ENCODE measurements at regions of chr4 and their contacts with region 1.

Region 1: GRCh38 chr4:8267077-8267476 is 2.5 kb upstream of the HTRA3 start:
- DNase-seq: peak; percentile 72
- H3K4me3 ChIP-seq: no peak overlapping the region
- H3K27ac ChIP-seq: no peak overlapping the region
- H3K4me1 ChIP-seq: peaks cover 11% of the 10 kb centered on the region
- H3K27me3 ChIP-seq: no peaks in the 10 kb centered on the region
- CTCF ChIP-seq: peak; percentile 90 to 94
- POLR2A ChIP-seq: no peak

Region 2: GRCh38 chr4:8058031-8058479 is 209.0 kb before region 1 on chr4:
- CTCF ChIA-PET with region 1: no interaction called
- POLR2A ChIA-PET with region 1: no interaction called
- dilution Hi-C with region 1: no loop called
- intact Hi-C with region 1: no loop called
- DNase-seq: no peak
- H3K4me3 ChIP-seq: no peak overlapping the region
- H3K27ac ChIP-seq: no peak overlapping the region
- H3K4me1 ChIP-seq: no peaks in the 10 kb centered on the region
- H3K27me3 ChIP-seq: no peaks in the 10 kb centered on the region
- CTCF ChIP-seq: no peak
- POLR2A ChIP-seq: no peak

Region 3: GRCh38 chr4:8191136-8191747 is 75.8 kb before region 1 on chr4:
- CTCF ChIA-PET with region 1: no interaction called
- POLR2A ChIA-PET with region 1: no interaction called
- dilution Hi-C with region 1: no loop called
- intact Hi-C with region 1: no loop called
- DNase-seq: peak; percentile 99
- H3K4me3 ChIP-seq: no peak overlapping the region
- H3K27ac ChIP-seq: peak overlapping the region; percentile 95
- H3K4me1 ChIP-seq: peaks cover 61% of the 10 kb centered on the region
- H3K27me3 ChIP-seq: no peaks in the 10 kb centered on the region
- CTCF ChIP-seq: no peak
- POLR2A ChIP-seq: peak; percentile 74

Region 4: DNA sequence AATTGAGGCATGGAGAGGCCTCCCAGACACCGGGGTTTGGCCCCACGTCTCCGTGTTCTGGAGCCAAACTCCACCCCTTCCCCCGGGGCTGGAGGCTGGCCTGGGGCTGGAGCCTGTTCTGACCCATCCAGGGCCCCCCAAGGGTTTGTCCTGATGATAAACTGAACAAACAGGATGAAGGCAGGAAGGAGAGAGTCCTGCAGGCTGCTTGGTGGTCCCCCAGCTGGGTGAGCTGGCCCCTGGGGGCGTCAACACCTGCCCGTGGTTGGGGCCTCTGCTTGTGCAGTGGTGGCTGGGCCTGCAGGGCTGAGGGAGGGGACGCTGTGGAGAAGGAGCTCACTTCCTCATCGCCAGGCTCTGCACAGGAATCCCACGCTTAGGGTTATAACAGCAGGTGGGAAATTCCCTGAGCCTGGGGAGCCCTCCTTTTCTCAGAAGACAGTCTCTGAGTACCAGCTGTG is 65.7 kb before region 1 on chr4:
- CTCF ChIA-PET with region 1: no interaction called
- POLR2A ChIA-PET with region 1: no interaction called
- dilution Hi-C with region 1: no loop called
- intact Hi-C with region 1: no loop called
- DNase-seq: peak; percentile 52
- H3K4me3 ChIP-seq: peak overlapping the region; percentile 15 to 77 (median 72)
- H3K27ac ChIP-seq: peak overlapping the region; percentile 82
- H3K4me1 ChIP-seq: peaks cover 59% of the 10 kb centered on the region
- H3K27me3 ChIP-seq: no peaks in the 10 kb centered on the region
- CTCF ChIP-seq: no peak
- POLR2A ChIP-seq: no peak

Region 5: GRCh38 chr4:8241895-8242696 is 25.0 kb before region 1 on chr4:
- CTCF ChIA-PET with region 1: interaction called, 21 read pairs
- POLR2A ChIA-PET with region 1: no interaction called
- dilution Hi-C with region 1: no loop called
- intact Hi-C with region 1: no loop called
- DNase-seq: peak; percentile 71
- H3K4me3 ChIP-seq: no peak overlapping the region
- H3K27ac ChIP-seq: peak overlapping the region; percentile 36
- H3K4me1 ChIP-seq: no peaks in the 10 kb centered on the region
- H3K27me3 ChIP-seq: no peaks in the 10 kb centered on the region
- CTCF ChIP-seq: peak; percentile 94 to 98
- POLR2A ChIP-seq: no peak

Region 6: GRCh38 chr4:8391972-8392371 is 124.9 kb after region 1 on chr4:
- CTCF ChIA-PET with region 1: interaction called, 45 read pairs
- POLR2A ChIA-PET with region 1: interaction called, 4 read pairs
- dilution Hi-C with region 1: no loop called
- intact Hi-C with region 1: loop called (anchors 2 kb)
- DNase-seq: peak; percentile 96
- H3K4me3 ChIP-seq: no peak overlapping the region
- H3K27ac ChIP-seq: peak overlapping the region; percentile 55
- H3K4me1 ChIP-seq: peaks cover 30% of the 10 kb centered on the region
- H3K27me3 ChIP-seq: no peaks in the 10 kb centered on the region
- CTCF ChIP-seq: no peak
- POLR2A ChIP-seq: no peak

Region 7: GRCh38 chr4:8410641-8411271 is 143.7 kb after region 1 on chr4:
- CTCF ChIA-PET with region 1: interaction called, 55 read pairs
- POLR2A ChIA-PET with region 1: no interaction called
- dilution Hi-C with region 1: no loop called
- intact Hi-C with region 1: loop called (anchors 2 kb)
- DNase-seq: peak; percentile 94
- H3K4me3 ChIP-seq: no peak overlapping the region
- H3K27ac ChIP-seq: no peak overlapping the region
- H3K4me1 ChIP-seq: no peaks in the 10 kb centered on the region
- H3K27me3 ChIP-seq: no peaks in the 10 kb centered on the region
- CTCF ChIP-seq: peak; percentile 63 to 72
- POLR2A ChIP-seq: no peak

Region 8: GRCh38 chr4:8594097-8595038 is 327.3 kb after region 1 on chr4:
- CTCF ChIA-PET with region 1: no interaction called
- POLR2A ChIA-PET with region 1: no interaction called
- dilution Hi-C with region 1: no loop called
- intact Hi-C with region 1: loop called (anchors 10 kb)
- DNase-seq: peak; percentile 53
- H3K4me3 ChIP-seq: no peak overlapping the region
- H3K27ac ChIP-seq: no peak overlapping the region
- H3K4me1 ChIP-seq: no peaks in the 10 kb centered on the region
- H3K27me3 ChIP-seq: peaks cover 22 to 26% of the 10 kb centered on the region in 2 experiments
- CTCF ChIP-seq: peak; percentile 49 to 63
- POLR2A ChIP-seq: no peak

Region 9: DNA sequence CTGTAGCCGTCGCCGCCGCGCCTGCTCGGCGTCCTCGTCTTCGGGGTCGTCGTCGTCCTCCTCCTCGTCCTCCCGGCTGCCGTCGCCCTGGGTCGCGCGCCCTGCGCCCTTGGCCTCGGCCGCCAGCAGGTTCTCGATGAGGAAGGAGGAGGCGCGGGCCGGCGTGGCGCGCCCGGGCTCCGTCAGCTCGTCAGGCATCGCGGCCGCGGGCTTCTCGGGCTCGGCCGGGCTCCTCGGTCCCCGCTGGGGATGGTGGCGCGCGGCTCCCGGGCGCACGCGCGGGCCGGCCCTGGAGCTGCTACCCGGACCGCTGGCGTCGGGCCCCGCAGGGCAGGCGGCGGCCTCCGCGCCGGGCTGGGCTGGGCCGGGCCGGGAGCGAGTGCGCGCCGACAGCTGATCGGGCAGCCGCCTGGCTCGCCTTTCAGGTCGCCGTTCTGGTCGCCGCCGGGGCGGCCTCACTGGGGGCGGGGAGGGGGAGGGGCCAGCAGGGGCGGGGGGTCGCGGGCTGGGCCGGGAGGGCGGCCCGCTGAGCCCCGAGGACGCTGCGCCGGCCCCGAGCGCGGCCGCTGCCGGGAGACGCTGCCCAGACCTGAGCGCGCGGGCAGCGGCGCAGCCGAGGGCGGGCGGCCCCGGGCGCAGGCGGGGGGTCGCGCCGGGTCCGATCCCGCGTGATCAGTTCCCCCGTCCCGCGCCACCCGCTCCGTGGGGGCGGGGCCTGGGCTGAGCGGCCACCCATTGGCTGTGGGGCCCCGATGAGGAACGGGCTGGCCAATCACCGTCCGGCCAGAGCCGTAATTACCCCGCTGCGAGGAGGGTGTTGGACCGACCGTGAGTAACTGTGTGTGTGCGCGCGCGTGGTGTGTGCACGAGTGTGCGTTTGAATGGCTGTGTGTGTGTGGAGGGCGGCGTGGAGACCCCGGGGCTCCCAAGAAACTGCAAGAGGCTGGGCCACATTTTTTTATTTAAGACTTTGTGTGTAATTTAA is 604.6 kb after region 1 on chr4 and contains the start of gene HMX1:
- CTCF ChIA-PET with region 1: no interaction called
- POLR2A ChIA-PET with region 1: no interaction called
- dilution Hi-C with region 1: no loop called
- intact Hi-C with region 1: no loop called
- DNase-seq: no peak
- H3K4me3 ChIP-seq: no peak within 1 kb of the TSS
- H3K27ac ChIP-seq: no peak within 1 kb of the TSS
- H3K4me1 ChIP-seq: no peaks in the 10 kb centered on the region
- H3K27me3 ChIP-seq: peaks cover 75 to 92% of the 10 kb centered on the region in 2 experiments
- CTCF ChIP-seq: no peak
- POLR2A ChIP-seq: no peak
- total RNA-seq, gene HMX1: not detected in 2 replicates

Measured in endothelial cell of umbilical vein (primary cell).